Vagina (tissue), 2 donors: ENCODE measurements at regions of chr4 and their contacts with region 1.

Region 1: GRCh38 chr4:88738180-88738579 is 40.6 kb upstream of the NAP1L5 start:
- DNase-seq: no peak
- H3K4me3 ChIP-seq: no peak overlapping the region
- H3K27ac ChIP-seq: no peak overlapping the region
- H3K4me1 ChIP-seq: peaks cover 22% of the 10 kb centered on the region
- H3K27me3 ChIP-seq: no peaks in the 10 kb centered on the region
- CTCF ChIP-seq: no peak
- POLR2A ChIP-seq: no peak

Region 2: DNA sequence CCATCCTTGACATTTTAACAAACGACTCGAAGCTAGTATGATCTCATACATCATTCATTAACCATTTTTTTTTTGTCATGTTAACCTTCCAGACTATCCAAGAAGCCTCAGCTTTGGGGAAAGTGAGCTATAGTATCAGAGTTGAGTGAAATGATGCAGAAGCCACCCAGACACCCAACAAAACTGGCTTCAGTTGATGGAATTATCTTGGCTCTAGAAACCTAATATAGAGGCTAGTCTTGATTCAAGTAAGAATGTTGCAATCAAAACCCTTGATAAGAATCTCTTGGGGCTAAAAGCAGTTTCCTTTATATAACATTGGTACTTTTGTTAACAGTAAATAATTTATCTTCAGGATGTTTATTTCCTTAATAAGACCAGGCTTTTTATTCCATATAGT is 48.3 kb before region 1 on chr4:
- intact Hi-C with region 1: loop called (anchors 2 kb)
- DNase-seq: no peak
- H3K4me3 ChIP-seq: no peak overlapping the region
- H3K27ac ChIP-seq: no peak overlapping the region
- H3K4me1 ChIP-seq: no peaks in the 10 kb centered on the region
- H3K27me3 ChIP-seq: no peaks in the 10 kb centered on the region
- CTCF ChIP-seq: no peak
- POLR2A ChIP-seq: no peak

Region 3: DNA sequence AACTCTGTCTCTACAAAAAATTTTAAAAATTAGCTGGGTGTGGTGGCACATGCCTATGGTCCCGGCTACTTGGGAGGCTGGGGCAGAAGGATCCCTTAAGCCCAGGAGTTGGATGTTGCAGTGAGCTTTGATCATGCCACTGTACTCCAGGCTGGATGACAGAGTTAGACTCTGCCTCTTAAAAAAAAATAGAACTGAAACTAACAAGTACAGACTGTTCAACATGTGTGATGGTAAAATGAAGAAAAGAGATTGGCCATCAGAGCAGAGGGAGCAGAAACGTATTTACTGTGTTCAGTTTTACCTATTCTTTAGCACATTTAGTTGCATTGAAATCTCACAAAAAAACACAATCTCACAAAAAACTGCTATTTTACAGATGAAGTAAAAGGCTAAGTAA is 37.3 kb after region 1 on chr4:
- intact Hi-C with region 1: no loop called
- DNase-seq: no peak
- H3K4me3 ChIP-seq: no peak overlapping the region
- H3K27ac ChIP-seq: no peak overlapping the region
- H3K4me1 ChIP-seq: peaks cover 10% of the 10 kb centered on the region
- H3K27me3 ChIP-seq: no peaks in the 10 kb centered on the region
- CTCF ChIP-seq: no peak
- POLR2A ChIP-seq: no peak